ENCODE measurements at regions of chr5 and their contacts with region 1.

Region 1: DNA sequence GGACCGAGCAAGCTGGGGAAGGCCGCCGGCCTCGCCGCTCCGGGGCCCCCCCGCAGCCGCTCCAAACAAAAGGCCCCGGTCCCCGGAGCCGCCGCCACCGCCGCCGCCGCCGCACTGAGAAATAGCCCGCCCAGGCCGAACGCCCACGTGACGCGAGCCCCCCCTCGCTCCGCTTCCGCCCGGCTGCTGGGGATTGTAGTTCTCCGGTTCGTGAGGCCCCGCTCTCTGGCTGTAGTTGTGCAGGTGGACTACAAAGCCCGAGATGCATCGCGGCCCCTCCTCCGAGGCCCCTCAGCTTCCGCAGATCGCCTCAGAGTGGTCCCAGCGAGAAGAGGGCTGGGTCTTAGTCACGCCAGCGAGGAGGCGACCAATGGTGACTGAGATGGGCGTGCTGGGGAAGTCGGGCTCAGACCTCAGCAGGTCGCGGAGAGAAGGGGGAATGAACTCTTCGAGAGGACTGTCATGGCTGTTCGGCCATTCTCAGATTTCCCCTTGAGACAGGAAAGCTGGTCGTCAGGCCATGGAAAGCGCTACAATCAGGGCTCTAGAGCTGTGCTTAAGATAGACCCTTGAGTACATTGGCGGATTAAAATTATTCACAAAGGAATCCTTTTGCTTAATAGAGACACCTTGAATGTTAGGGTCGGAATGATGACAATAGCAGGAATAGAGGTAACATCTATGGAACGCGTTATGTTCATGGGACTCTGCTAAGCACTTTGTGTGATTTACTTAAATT is 489 bp upstream of the PANK3 start:
- DNase-seq: peak; percentile 90 to 96 (median 95)
- ATAC-seq: peak; percentile 98
- H3K4me3 ChIP-seq: peak overlapping the region; percentile 79
- H3K4me3 Mint-ChIP-seq: peak overlapping the region; percentile 88 to 100 (median 94)
- H3K27ac ChIP-seq: peak overlapping the region; percentile 83
- H3K27ac Mint-ChIP-seq: peak overlapping the region; percentile 87 to 100 (median 97)
- H3K4me1 ChIP-seq: peaks cover 0 to 16% of the 10 kb centered on the region in 2 donors
- H3K4me1 Mint-ChIP-seq: peaks cover 19 to 48% (median 44%) of the 10 kb centered on the region in 7 donors
- H3K27me3 ChIP-seq: no peaks in the 10 kb centered on the region
- H3K27me3 Mint-ChIP-seq: peaks cover 0 to 4% (median 0%) of the 10 kb centered on the region in 5 donors

Region 2: DNA sequence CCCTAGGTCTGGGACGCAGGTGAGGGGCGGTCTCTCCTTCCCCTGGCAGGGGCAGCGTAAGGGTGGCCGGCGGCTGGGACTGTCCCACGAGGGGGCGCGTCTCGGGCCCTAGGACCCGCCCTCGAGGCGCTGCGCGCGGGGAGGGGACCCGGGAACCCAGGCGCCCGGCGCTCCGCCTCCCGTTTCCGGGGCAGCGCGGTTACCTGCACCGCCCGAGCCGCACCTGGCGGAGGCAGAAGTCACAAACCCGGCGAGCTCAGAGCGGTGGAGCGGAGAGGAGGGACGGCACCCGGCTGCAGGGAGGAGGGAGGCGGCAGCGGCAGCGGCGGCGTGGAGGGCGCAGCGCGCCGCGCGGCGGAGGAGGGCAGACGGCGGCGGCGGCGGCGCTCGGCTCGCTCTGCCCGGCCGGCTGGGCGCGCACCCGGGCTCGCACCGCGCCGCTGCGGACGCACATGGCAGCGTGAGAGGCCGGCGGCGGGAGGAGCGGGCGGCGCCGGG is 288.1 kb before region 1 on chr5 and contains the start of gene WWC1:
- CTCF ChIA-PET with region 1: no interaction called
- POLR2A ChIA-PET with region 1: interaction called, 3 read pairs
- intact Hi-C with region 1: loop called in 1 of 2 experiments (anchors 2 kb)
- DNase-seq: peak in 8 of 9 donors; percentile 15 to 67 (median 55)
- ATAC-seq: peak; percentile 95
- H3K4me3 ChIP-seq: no peak within 1 kb of the TSS
- H3K4me3 Mint-ChIP-seq: peak within 1 kb of the TSS in 9 of 10 donors; percentile 35 to 82 (median 72)
- H3K27ac ChIP-seq: no peak within 1 kb of the TSS
- H3K27ac Mint-ChIP-seq: no peak within 1 kb of the TSS
- H3K4me1 ChIP-seq: no peaks in the 10 kb centered on the region
- H3K4me1 Mint-ChIP-seq: peaks cover 3 to 21% (median 17%) of the 10 kb centered on the region in 7 donors
- H3K27me3 ChIP-seq: peaks cover 0 to 6% of the 10 kb centered on the region in 2 donors
- H3K27me3 Mint-ChIP-seq: peaks cover 0 to 62% (median 45%) of the 10 kb centered on the region in 5 donors
- total RNA-seq, gene WWC1: 0.56 to 1.4 (median 0.86) TPM in 4 of 5 experiments, not detected in the other

Region 3: DNA sequence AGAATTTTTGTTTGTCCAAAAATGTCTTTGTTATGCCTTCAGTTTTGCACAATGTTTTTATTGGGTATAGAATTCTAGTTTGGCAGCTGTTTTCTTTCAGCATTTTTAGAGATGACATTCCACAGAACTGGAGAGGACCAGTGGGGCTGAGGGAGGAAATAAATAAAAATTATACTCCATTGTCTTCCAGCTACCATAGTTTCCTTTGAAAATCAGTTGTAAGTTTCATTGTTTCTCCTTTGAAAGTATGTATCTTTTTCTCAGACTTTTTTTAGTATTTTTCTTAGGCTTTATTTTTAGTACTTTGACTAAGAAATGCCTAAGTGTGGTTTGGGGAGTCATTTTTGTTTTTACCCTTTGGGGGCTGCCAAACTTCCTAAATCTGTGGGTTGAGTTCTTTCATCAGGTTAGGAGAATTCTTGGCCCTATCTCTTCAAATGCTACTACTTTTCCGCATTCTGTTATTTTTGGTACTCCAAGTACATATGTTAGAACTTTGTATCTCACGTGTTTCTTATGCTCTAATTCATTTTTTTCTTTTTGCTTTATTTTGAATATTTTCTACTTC is 65.7 kb before region 1 on chr5:
- CTCF ChIA-PET with region 1: no interaction called
- POLR2A ChIA-PET with region 1: no interaction called
- intact Hi-C with region 1: loop called in 1 of 2 experiments (anchors 5 kb)
- DNase-seq: no peak
- ATAC-seq: no peak
- H3K4me3 ChIP-seq: no peak overlapping the region
- H3K4me3 Mint-ChIP-seq: no peak overlapping the region
- H3K27ac ChIP-seq: no peak overlapping the region
- H3K27ac Mint-ChIP-seq: no peak overlapping the region
- H3K4me1 ChIP-seq: no peaks in the 10 kb centered on the region
- H3K4me1 Mint-ChIP-seq: peaks cover 0 to 6% (median 0%) of the 10 kb centered on the region in 7 donors
- H3K27me3 ChIP-seq: no peaks in the 10 kb centered on the region
- H3K27me3 Mint-ChIP-seq: no peaks in the 10 kb centered on the region

Region 4: GRCh38 chr5:168537176-168537575 is 42.5 kb before region 1 on chr5:
- CTCF ChIA-PET with region 1: no interaction called
- POLR2A ChIA-PET with region 1: no interaction called
- intact Hi-C with region 1: no loop called
- DNase-seq: no peak
- ATAC-seq: no peak
- H3K4me3 ChIP-seq: no peak overlapping the region
- H3K4me3 Mint-ChIP-seq: no peak overlapping the region
- H3K27ac ChIP-seq: no peak overlapping the region
- H3K27ac Mint-ChIP-seq: no peak overlapping the region
- H3K4me1 ChIP-seq: no peaks in the 10 kb centered on the region
- H3K4me1 Mint-ChIP-seq: no peaks in the 10 kb centered on the region
- H3K27me3 ChIP-seq: peaks cover 0 to 4% of the 10 kb centered on the region in 2 donors
- H3K27me3 Mint-ChIP-seq: peaks cover 6 to 15% (median 12%) of the 10 kb centered on the region in 5 donors

Region 5: GRCh38 chr5:168612996-168613395 is 33.3 kb after region 1 on chr5:
- CTCF ChIA-PET with region 1: no interaction called
- POLR2A ChIA-PET with region 1: interaction called, 6 read pairs
- intact Hi-C with region 1: loop called in 1 of 2 experiments (anchors 1 kb)
- DNase-seq: peak in 7 of 9 donors; percentile 25 to 61 (median 55)
- ATAC-seq: peak; percentile 98
- H3K4me3 ChIP-seq: peak overlapping the region; percentile 19
- H3K4me3 Mint-ChIP-seq: peak overlapping the region in 8 of 10 donors; percentile 33 to 83 (median 68)
- H3K27ac ChIP-seq: peak overlapping the region; percentile 47
- H3K27ac Mint-ChIP-seq: peak overlapping the region in 8 of 9 donors; percentile 62 to 89 (median 84)
- H3K4me1 ChIP-seq: peaks cover 4 to 9% of the 10 kb centered on the region in 2 donors
- H3K4me1 Mint-ChIP-seq: peaks cover 8 to 20% (median 16%) of the 10 kb centered on the region in 7 donors
- H3K27me3 ChIP-seq: no peaks in the 10 kb centered on the region
- H3K27me3 Mint-ChIP-seq: no peaks in the 10 kb centered on the region

Region 6: DNA sequence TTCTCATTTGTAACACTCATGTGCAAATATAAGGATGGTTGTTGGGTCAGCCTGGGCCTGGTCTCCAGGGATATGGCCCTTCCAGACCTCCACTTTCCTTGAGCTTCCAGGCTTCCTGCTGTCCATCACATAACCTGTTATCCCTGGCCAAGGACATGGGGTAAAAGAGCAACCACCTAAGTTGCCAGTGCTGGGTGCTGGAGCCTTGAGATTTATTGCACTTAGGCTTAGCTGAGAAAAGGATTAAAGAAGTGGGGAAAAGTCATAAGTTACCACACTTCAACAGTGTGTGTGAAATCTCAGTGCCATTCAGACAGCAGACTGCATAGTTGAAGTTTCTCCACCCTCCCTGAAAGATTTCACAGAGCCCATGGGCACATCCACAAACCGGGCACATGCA is 58.1 kb after region 1 on chr5:
- CTCF ChIA-PET with region 1: no interaction called
- POLR2A ChIA-PET with region 1: no interaction called
- intact Hi-C with region 1: no loop called
- DNase-seq: no peak
- ATAC-seq: no peak
- H3K4me3 ChIP-seq: no peak overlapping the region
- H3K4me3 Mint-ChIP-seq: no peak overlapping the region
- H3K27ac ChIP-seq: no peak overlapping the region
- H3K27ac Mint-ChIP-seq: no peak overlapping the region
- H3K4me1 ChIP-seq: no peaks in the 10 kb centered on the region
- H3K4me1 Mint-ChIP-seq: no peaks in the 10 kb centered on the region
- H3K27me3 ChIP-seq: no peaks in the 10 kb centered on the region
- H3K27me3 Mint-ChIP-seq: peaks cover 0 to 12% (median 0%) of the 10 kb centered on the region in 5 donors

Region 7: DNA sequence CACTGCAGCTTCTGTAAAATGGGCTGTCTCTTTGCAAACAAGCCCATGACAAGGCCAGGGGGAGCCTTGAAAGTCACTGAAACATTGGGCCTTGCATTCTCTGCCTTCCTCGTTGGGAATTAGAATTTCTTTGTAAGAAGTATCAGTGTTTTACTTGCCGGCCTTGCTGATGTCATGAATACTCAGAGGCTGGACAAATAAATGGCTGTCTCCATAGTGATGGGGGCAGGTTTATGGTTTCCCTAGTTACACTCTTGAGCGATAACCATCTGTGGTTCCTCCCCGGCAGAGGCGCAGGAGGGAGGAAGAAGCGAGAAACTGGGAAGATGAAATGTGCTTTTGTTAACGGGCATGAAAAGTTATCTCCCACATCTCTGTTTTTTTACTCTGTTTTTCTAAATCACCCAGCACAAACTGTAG is 272.3 kb after region 1 on chr5:
- CTCF ChIA-PET with region 1: no interaction called
- POLR2A ChIA-PET with region 1: no interaction called
- intact Hi-C with region 1: loop called in 1 of 2 experiments (anchors 2 kb)
- DNase-seq: peak in 2 of 9 donors; percentile 20 to 30
- ATAC-seq: no peak
- H3K4me3 ChIP-seq: no peak overlapping the region
- H3K4me3 Mint-ChIP-seq: peak overlapping the region in 4 of 10 donors; percentile 4 to 69 (median 12)
- H3K27ac ChIP-seq: no peak overlapping the region
- H3K27ac Mint-ChIP-seq: peak overlapping the region in 3 of 9 donors; percentile 56 to 79 (median 69)
- H3K4me1 ChIP-seq: no peaks in the 10 kb centered on the region
- H3K4me1 Mint-ChIP-seq: peaks cover 0 to 23% (median 10%) of the 10 kb centered on the region in 7 donors
- H3K27me3 ChIP-seq: no peaks in the 10 kb centered on the region
- H3K27me3 Mint-ChIP-seq: peaks cover 10 to 23% (median 12%) of the 10 kb centered on the region in 5 donors

Region 8: GRCh38 chr5:169100421-169101075 is 520.9 kb after region 1 on chr5:
- CTCF ChIA-PET with region 1: no interaction called
- POLR2A ChIA-PET with region 1: no interaction called
- intact Hi-C with region 1: no loop called
- DNase-seq: no peak
- ATAC-seq: no peak
- H3K4me3 ChIP-seq: no peak overlapping the region
- H3K4me3 Mint-ChIP-seq: no peak overlapping the region
- H3K27ac ChIP-seq: no peak overlapping the region
- H3K27ac Mint-ChIP-seq: no peak overlapping the region
- H3K4me1 ChIP-seq: no peaks in the 10 kb centered on the region
- H3K4me1 Mint-ChIP-seq: no peaks in the 10 kb centered on the region
- H3K27me3 ChIP-seq: no peaks in the 10 kb centered on the region
- H3K27me3 Mint-ChIP-seq: peaks cover 0 to 25% (median 4%) of the 10 kb centered on the region in 5 donors

Measured in naive thymus-derived CD4-positive, alpha-beta T cell (primary cell).